Heart left ventricle (tissue), 16 donors: ENCODE measurements at regions of chr5 and their contacts with region 1.

Region 1: DNA sequence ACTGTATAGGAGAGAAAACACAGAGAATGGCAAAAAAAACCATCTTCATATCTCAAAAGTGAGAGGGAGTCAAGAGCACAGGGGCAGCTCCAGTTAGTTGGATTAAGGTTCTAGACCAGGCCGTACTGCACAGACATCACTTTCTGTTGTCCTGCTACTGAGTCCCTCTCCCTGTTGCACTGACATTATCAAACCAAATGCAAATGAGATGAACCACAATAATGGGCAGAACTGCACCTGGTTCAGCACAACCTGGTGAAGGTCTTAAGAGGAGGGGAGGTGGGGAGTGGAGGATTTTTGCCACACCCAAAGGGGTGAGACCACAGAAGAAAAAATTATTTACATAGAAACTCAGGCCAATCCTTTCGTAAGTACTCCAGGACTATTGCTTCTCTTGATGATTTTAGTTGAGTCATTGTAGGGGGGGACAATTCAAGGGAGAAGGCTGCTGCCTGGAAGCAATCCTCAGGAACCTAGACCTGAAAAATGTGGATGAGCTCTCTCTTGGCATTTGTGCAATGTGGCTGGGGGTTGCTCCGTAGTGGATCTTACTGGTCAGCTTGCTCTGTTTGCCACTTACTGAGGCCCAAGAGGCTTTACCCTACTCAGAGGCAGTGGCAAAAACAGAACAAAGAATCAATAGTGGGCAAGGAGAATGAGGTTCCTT is 94.5 kb upstream of the PPP1R2B start:
- DNase-seq: no peak
- ATAC-seq: no peak
- H3K4me3 ChIP-seq: no peak overlapping the region
- H3K27ac ChIP-seq: peak overlapping the region in 1 of 12 donors; percentile 2
- H3K4me1 ChIP-seq: peaks cover 0 to 22% (median 0%) of the 10 kb centered on the region in 12 donors
- H3K27me3 ChIP-seq: no peaks in the 10 kb centered on the region
- CTCF ChIP-seq: no peak
- POLR2A ChIP-seq: no peak

Region 2: DNA sequence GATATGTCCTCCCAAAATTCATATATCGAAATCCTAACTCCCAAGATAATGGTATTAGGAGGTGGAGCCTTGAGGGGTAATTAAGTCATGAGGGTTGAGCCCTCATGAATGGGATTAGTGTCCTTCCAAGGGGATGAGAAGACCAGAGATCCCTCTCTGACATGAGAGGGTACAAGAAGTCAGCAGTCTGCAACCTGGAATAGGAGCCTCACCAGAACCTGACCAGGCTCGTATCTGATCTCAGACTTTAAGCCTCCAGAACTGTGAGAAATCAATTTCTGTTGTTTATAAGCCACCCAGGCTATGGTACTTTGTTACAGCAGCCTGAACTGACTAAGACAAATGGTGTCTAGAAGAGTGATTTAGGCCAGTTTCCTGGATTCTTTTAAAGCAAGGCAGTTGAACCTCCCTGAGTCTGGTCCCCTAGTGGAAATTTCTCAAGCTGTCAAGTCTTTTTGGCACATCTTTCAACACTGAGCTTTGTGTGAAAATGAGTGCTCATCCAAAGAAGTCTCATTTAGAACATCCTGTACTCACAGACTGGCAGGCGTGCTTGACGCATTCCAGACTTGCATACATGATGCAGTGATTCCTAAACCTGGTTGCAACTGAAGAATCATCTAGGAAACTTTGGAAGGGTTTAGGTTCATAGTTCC is 160.3 kb before region 1 on chr5:
- intact Hi-C with region 1: loop called in 1 of 10 experiments (anchors 10 kb)
- DNase-seq: peak; percentile 40 to 89 (median 62)
- ATAC-seq: peak; percentile 93 to 97 (median 94)
- H3K4me3 ChIP-seq: no peak overlapping the region
- H3K27ac ChIP-seq: peak overlapping the region; percentile 52 to 88 (median 78)
- H3K4me1 ChIP-seq: peaks cover 0 to 31% (median 9%) of the 10 kb centered on the region in 12 donors
- H3K27me3 ChIP-seq: no peaks in the 10 kb centered on the region
- CTCF ChIP-seq: peak in 6 of 12 donors; percentile 6 to 29 (median 16)
- POLR2A ChIP-seq: no peak

Region 3: DNA sequence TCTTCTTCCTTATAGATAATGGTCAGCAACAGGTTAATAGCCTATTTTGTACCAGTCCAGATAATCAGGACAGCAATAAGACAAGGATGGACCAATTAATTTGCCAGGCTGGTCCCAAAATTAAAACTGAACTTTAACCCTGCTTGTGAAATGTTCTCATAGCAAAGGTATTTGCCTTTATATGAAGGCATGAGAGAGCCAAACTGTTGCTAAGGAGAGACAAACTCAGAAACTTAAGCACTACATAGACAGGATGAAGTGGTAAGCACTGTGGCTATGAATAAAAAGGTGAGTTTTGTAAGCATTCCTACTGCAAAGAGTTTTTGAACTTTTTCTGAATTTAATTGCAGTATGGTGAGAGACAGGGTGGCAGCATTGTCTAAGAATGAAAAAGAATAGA is 80.2 kb before region 1 on chr5:
- intact Hi-C with region 1: no loop called
- DNase-seq: no peak
- ATAC-seq: peak in 3 of 4 donors; percentile 24 to 62 (median 35)
- H3K4me3 ChIP-seq: no peak overlapping the region
- H3K27ac ChIP-seq: peak overlapping the region in 6 of 12 donors; percentile 29 to 54 (median 44)
- H3K4me1 ChIP-seq: peaks cover 0 to 42% (median 18%) of the 10 kb centered on the region in 12 donors
- H3K27me3 ChIP-seq: no peaks in the 10 kb centered on the region
- CTCF ChIP-seq: no peak
- POLR2A ChIP-seq: no peak

Region 4: DNA sequence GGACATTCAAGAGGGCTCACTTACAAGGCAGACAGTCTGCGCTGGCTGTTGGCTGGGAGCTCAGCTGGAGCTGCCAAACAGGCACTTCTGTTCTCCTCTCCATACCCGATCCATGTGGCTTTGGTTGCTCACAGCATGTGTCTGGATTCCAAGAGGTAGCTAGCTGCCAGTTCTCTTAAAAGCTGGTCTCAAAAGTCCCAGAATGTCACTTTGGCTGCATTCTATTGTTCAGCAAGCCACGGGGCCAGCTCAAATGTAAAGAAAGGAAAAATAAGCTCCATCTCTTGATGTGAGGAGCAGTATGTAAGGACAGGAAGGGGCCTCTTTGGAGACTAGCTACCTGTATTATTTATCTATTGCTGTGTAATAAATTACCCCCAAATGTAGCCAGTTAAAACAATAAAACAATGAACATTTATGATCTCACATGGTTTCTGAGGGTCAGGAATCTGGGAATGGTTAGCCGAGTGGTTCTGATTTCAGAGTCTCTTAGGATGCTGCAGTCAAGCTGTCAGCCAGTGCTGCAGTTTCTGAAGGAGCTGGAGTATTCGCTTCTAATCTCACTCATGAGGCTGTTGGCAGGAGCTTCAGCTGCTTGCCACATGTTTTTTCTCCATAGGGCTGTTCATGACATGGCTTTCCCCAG is 1216.1 kb after region 1 on chr5:
- intact Hi-C with region 1: no loop called
- DNase-seq: peak in 1 of 5 donors; percentile 50
- ATAC-seq: peak in 3 of 4 donors; percentile 58 to 69 (median 63)
- H3K4me3 ChIP-seq: no peak overlapping the region
- H3K27ac ChIP-seq: peak overlapping the region in 1 of 12 donors; percentile 60
- H3K4me1 ChIP-seq: peaks cover 0 to 10% (median 4%) of the 10 kb centered on the region in 12 donors
- H3K27me3 ChIP-seq: no peaks in the 10 kb centered on the region
- CTCF ChIP-seq: no peak
- POLR2A ChIP-seq: no peak